PC-9 (cell line): ENCODE measurements at regions of chr3 and their contacts with region 1.

Region 1: GRCh38 chr3:43503067-43503728 is 118.6 kb downstream of the ANO10 start:
- DNase-seq: no peak
- H3K4me3 ChIP-seq: no peak overlapping the region
- H3K27ac ChIP-seq: no peak overlapping the region
- H3K4me1 ChIP-seq: peaks cover under 1% of the 10 kb centered on the region; the same call in 1 of the 2 replicates
- H3K27me3 ChIP-seq: no peaks in the 10 kb centered on the region
- CTCF ChIP-seq: peak; percentile 73

Region 2: GRCh38 chr3:43155464-43156121 is 347.6 kb before region 1 on chr3:
- CTCF ChIA-PET with region 1: no interaction called
- POLR2A ChIA-PET with region 1: no interaction called
- intact Hi-C with region 1: loop called (anchors 5 kb)
- DNase-seq: peak; percentile 47 to 60
- H3K4me3 ChIP-seq: no peak overlapping the region
- H3K27ac ChIP-seq: no peak overlapping the region
- H3K4me1 ChIP-seq: no peaks in the 10 kb centered on the region
- H3K27me3 ChIP-seq: no peaks in the 10 kb centered on the region
- CTCF ChIP-seq: peak; percentile 70